ENCODE measurements at regions of chr10 and their contacts with region 1.

Region 1: GRCh38 chr10:22988581-22989360 is 60.9 kb downstream of the ARMC3 start:
- DNase-seq: peak; percentile 55
- CTCF ChIP-seq: peak; percentile 89

Region 2: DNA sequence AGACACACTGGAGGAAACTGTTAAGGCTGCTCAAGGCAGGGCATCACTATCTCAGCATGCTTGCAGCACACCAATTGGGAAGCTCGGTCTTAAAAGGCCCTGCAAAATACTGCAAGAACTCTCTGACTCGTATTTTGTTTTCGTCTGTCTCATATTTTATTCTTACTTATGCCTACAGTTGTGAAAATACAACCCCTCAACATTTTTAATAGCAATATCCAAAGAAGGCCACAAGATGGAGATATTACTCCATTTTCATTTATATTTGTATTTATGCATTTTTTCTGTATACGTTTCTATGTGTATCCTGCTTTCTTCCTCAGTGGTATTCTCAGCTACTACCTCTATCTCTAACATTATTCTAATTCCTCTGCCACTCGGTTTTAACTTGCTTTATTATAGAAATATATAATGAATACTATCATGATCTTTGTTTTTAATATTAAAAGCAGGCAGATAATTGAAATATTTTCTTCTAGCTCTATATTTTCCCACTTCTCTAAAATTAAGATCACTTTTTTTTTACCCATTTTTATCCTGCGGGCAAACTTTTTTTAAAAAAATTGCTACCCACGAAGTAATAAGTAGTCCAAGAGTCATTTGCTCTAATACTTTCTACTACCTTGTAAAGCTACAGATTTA is 995.3 kb before region 1 on chr10:
- CTCF ChIA-PET with region 1: interaction called, 31 read pairs
- POLR2A ChIA-PET with region 1: no interaction called
- DNase-seq: peak; percentile 20
- CTCF ChIP-seq: peak; percentile 46

Region 3: GRCh38 chr10:22259280-22259679 is 729.5 kb before region 1 on chr10:
- CTCF ChIA-PET with region 1: interaction called, 22 read pairs
- POLR2A ChIA-PET with region 1: no interaction called
- DNase-seq: peak; percentile 24
- CTCF ChIP-seq: peak; percentile 35

Region 4: DNA sequence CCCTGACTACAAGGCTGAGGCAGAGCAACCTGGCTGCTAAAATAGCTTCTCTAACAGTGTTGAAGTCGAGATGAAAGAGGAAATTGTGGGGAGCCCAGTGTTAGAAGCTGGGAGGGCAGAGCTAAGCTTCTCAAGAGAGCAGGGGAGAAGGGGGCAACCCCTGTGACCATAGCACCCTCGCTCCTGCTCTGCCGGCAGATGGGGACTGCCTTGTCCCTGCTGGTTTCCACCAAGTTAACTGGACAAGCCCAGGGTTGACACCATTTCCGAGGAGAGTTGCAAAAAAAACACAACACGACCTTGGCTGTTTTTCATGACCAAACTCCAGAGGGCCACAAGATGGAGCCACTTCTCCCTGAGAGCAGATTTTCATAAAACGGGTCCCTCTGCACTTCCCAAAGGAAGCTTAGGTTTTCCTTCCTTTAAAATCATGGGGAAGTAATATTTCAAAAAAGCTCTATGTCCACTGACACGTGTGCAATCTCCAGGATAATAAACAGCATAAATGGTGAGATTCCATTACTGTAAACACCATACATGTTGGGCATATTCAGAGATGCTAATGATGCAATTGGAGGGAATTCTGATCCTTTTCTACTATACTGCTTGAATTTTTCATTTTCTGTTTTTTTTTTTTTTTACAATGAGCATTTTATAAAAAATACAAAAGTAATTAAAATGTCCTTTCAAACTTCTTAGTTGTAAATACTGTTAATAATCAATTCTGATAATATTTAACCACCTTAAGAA is 414.8 kb before region 1 on chr10:
- CTCF ChIA-PET with region 1: interaction called, 12 read pairs
- POLR2A ChIA-PET with region 1: no interaction called
- DNase-seq: no peak
- CTCF ChIP-seq: no peak

Measured in GM10248 (cell line).